ENCODE measurements at regions of chr3 and their contacts with region 1.

Region 1: DNA sequence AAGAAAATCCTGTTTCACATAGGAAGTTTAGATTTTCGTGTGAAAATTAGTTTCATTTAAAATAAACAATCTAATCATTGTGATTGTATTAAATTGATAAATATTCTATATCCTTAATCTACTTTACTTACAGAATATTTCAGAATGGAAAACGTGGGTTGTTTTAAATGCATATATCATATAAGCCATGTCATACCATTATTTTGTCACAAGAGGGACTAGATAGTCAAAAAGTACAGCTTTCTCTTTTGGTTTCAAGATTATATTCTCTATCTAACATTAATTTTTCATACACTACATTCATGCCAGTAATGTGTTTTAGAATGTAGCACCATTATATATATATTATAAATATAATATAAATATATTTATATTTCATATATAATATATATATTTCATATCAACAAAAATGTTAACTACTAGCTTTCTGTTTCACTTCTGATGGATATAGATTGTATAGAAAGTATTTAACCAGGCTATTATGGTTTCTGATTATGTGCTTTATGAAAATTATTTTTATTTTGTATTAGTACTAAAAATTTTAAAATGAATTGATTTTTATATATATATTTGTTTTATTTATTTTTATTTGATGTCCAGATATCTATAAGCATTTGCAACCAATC is 45.3 kb downstream of the OSTN start:
- H3K4me3 Mint-ChIP-seq: no peak overlapping the region
- H3K27ac Mint-ChIP-seq: no peak overlapping the region
- H3K4me1 Mint-ChIP-seq: peaks cover 12% of the 10 kb centered on the region
- H3K27me3 Mint-ChIP-seq: no peaks in the 10 kb centered on the region

Region 2: GRCh38 chr3:191282262-191283215 is 38.2 kb after region 1 on chr3:
- intact Hi-C with region 1: loop called (anchors 5 kb)
- H3K4me3 Mint-ChIP-seq: no peak overlapping the region
- H3K27ac Mint-ChIP-seq: no peak overlapping the region
- H3K4me1 Mint-ChIP-seq: no peaks in the 10 kb centered on the region
- H3K27me3 Mint-ChIP-seq: peaks cover 5% of the 10 kb centered on the region

Region 3: GRCh38 chr3:191329654-191330528 is 85.5 kb after region 1 on chr3 and contains the start of gene UTS2B:
- intact Hi-C with region 1: loop called (anchors 5 kb)
- H3K4me3 Mint-ChIP-seq: peak within 1 kb of the TSS; percentile 79
- H3K27ac Mint-ChIP-seq: peak within 1 kb of the TSS; percentile 82
- H3K4me1 Mint-ChIP-seq: peaks cover 35% of the 10 kb centered on the region
- H3K27me3 Mint-ChIP-seq: peaks cover 17% of the 10 kb centered on the region